ENCODE measurements at regions of chr4 and their contacts with region 1.

Region 1: GRCh38 chr4:77586951-77587383 is 18.7 kb upstream of the CXCL13 start:
- DNase-seq: peak; percentile 87
- ATAC-seq: peak; percentile 94
- H3K4me3 Mint-ChIP-seq: peak overlapping the region; percentile 54
- H3K27ac Mint-ChIP-seq: peak overlapping the region; percentile 84
- H3K4me1 Mint-ChIP-seq: peaks cover 66% of the 10 kb centered on the region
- H3K27me3 Mint-ChIP-seq: peaks cover 16% of the 10 kb centered on the region

Region 2: DNA sequence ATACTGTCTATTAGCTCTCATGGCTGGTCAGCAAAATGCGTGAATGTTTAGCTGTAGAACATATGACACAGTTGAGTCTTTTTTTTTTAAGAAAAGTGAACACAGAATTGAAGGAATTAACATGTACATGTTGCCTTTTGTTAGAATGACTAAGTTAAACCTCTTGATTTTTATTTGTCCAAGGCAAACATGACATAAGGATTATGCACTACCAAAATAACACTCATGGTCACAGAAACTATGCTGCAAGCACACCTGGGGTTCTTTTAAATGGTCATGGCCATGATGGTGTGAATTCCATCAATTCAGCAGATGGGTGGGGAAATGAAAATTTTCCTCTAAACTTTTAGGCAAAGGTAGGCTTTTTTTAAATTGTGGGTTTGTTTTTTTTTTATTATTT is 61.4 kb before region 1 on chr4:
- CTCF ChIA-PET with region 1: no interaction called
- POLR2A ChIA-PET with region 1: no interaction called
- intact Hi-C with region 1: loop called in 1 of 2 experiments (anchors 2 kb)
- DNase-seq: no peak
- ATAC-seq: no peak
- H3K4me3 Mint-ChIP-seq: no peak overlapping the region
- H3K27ac Mint-ChIP-seq: no peak overlapping the region
- H3K4me1 Mint-ChIP-seq: peaks cover 2% of the 10 kb centered on the region
- H3K27me3 Mint-ChIP-seq: peaks cover 29% of the 10 kb centered on the region

Region 3: DNA sequence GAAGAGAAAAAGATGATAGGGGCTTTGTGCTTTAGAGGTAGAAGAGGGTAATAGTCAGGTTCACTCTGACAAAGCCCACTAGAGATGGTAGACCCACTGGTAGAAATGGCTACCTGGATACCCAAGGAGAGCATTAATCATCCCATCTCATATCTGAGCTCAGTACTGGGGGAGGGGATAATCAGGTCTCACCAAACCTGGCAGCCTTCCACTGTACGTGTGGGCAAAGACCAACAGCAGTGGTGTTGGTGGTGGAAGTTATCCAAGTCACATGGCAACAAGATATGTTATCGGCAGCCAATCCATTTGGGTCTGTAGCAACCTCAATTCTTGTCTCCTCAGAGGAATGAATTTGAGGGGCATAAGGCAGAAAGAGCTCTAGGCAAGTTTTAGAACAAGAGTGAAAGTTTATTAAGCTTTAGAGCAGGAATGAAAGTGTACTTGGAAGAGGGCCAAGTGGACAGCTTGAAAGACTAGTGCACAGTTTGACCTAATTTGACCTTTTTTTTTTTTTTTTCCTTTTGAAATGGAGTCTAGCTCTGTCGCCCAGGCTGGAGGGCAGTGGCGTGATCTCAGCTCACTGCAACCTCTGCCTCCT is 48.3 kb before region 1 on chr4:
- CTCF ChIA-PET with region 1: no interaction called
- POLR2A ChIA-PET with region 1: no interaction called
- intact Hi-C with region 1: loop called (anchors 2 kb)
- DNase-seq: peak; percentile 26
- ATAC-seq: peak; percentile 59
- H3K4me3 Mint-ChIP-seq: no peak overlapping the region
- H3K27ac Mint-ChIP-seq: peak overlapping the region; percentile 27
- H3K4me1 Mint-ChIP-seq: peaks cover 19% of the 10 kb centered on the region
- H3K27me3 Mint-ChIP-seq: peaks cover 45% of the 10 kb centered on the region

Region 4: DNA sequence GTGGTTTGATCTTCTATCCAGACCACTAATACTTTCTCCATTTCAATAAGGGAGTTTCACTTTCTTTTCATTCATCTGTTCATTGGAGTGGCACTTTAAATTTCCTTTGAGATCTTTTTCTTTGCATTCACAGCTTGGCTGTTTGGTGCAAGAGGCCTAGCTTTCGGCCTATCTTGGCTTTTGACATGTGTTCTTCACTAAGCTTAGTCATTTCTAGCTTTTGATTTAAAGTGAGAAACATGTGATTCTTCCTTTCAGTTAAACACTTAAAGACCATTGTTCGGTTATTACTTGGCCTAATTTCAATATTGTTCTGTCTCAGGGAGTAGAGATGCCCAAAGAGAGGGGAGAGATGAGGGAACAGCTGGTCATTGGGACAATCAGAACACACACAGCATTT is 42.9 kb after region 1 on chr4:
- CTCF ChIA-PET with region 1: no interaction called
- POLR2A ChIA-PET with region 1: no interaction called
- intact Hi-C with region 1: loop called in 1 of 2 experiments (anchors 1 kb)
- DNase-seq: peak; percentile 40
- ATAC-seq: peak; percentile 93
- H3K4me3 Mint-ChIP-seq: no peak overlapping the region
- H3K27ac Mint-ChIP-seq: peak overlapping the region; percentile 23
- H3K4me1 Mint-ChIP-seq: peaks cover 16% of the 10 kb centered on the region
- H3K27me3 Mint-ChIP-seq: peaks cover 2% of the 10 kb centered on the region

Region 5: DNA sequence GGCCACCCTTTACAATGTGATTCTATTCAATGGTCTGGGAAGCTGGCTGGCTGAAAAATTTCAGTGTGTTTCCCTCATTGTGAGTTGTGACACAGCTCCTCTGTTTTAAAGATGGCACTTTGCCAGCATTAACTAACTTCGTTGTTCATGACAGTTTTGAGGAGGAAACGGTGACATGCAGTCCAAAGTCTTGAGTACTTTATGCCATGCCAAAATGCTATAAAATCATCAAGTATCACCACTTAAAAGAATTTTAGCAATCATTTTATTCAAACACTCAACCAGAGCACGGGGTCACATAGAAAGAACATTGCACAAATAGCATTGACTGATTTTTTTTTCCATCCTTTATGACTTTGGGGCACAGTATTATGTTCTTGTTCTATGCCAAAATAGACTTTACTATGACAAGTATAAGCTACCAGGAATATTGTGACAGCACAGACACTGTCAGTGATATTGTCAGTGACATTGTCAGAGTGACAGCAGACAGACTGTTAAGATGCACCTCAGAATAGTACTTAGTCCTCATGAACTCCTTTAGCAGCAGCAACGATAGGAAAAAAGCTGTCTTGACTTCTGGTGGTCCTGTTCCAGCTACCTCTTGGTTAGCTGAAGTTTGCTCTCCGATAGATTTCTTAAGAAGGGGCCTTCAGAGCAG is 65.4 kb after region 1 on chr4:
- CTCF ChIA-PET with region 1: no interaction called
- POLR2A ChIA-PET with region 1: no interaction called
- intact Hi-C with region 1: no loop called
- DNase-seq: no peak
- ATAC-seq: no peak
- H3K4me3 Mint-ChIP-seq: no peak overlapping the region
- H3K27ac Mint-ChIP-seq: no peak overlapping the region
- H3K4me1 Mint-ChIP-seq: no peaks in the 10 kb centered on the region
- H3K27me3 Mint-ChIP-seq: peaks cover 3% of the 10 kb centered on the region

Region 6: DNA sequence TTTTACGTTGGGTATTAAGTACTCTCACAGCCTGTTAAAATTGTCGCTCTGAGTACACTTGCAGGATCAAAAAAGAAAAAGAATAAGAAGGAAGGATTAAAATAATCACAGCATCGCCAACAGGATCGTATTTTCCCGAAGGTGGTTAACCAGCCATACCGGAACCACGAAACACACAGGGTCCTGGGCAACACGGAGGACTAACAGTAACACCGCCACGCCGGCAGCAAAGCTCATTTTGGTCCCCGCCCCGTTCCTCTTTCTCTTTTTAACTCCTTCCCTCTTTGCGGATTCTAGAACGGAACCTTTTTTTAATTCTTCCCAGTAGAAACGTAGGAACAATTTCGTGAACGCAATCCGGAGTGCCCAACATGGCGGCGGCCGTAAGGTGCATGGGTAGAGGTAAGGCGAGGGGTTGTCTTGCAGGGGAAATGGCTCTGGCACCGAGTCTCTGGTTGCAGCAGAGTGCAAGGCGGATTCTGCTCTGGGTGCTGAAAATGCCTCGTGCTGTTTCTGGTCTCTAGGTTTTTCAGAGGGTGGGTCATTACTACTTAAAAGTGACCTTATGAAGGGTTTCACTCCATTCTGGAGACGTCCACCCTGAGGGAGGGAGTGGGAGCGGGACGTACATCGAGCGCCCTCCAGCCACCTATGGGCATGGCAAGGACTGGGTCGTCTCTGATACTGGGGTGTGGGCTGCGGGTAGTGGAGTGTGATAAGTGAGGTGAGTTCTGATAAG is 275.7 kb after region 1 on chr4 and contains the start of gene MRPL1:
- CTCF ChIA-PET with region 1: no interaction called
- POLR2A ChIA-PET with region 1: interaction called, 9 read pairs
- intact Hi-C with region 1: loop called (anchors 1 to 2 kb)
- DNase-seq: peak; percentile 92
- ATAC-seq: peak; percentile 78
- H3K4me3 Mint-ChIP-seq: peak within 1 kb of the TSS; percentile 98
- H3K27ac Mint-ChIP-seq: peak within 1 kb of the TSS; percentile 100
- H3K4me1 Mint-ChIP-seq: peaks cover 61% of the 10 kb centered on the region
- H3K27me3 Mint-ChIP-seq: peaks cover 2% of the 10 kb centered on the region
- total RNA-seq, gene MRPL1: 61.1 to 70.6 TPM

Region 7: DNA sequence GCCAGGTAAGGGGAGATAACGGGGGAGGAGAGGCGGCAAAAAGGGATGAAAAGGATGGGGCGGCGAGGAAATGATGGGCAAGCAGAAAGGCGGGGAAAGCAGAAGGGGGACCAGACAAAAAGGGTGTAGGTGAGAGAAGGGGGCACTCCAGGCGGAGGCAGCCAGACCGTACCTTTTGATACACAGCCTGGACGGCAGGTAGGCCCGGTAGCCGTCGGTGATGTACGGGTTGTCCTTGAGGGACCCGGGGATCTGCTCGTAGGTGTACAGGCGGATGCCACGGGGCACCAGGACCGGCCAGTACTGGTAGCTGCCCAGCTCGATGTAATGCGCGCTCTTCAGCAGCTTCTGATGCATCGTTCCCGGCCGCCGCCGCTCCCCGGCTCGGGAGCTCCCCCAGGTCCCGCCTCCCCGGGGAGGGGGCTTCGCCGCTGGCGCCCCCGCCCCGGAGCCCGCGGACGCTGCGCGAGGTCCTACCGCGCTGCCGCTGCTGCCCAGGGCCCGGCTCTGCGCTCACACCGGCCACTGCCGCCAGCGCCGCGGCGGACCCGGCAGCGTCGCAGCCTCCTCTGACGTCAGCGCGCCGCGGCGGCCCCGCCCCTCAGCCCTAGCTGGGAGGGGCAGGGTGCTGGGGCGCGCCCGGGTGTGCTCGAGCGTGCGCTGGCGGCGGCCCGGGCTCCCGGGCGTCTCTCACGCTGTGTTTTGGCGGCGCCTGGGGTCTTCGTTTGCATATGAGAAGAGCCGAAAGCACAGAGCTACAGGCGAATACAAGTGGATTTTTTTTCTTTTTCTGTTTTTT is 1352.1 kb after region 1 on chr4 and contains the start of gene PAQR3:
- CTCF ChIA-PET with region 1: no interaction called
- POLR2A ChIA-PET with region 1: no interaction called
- intact Hi-C with region 1: loop called in 1 of 2 experiments (anchors 10 kb)
- DNase-seq: peak; percentile 91
- ATAC-seq: peak; percentile 95
- H3K4me3 Mint-ChIP-seq: peak within 1 kb of the TSS; percentile 88
- H3K27ac Mint-ChIP-seq: peak within 1 kb of the TSS; percentile 83
- H3K4me1 Mint-ChIP-seq: peaks cover 30% of the 10 kb centered on the region
- H3K27me3 Mint-ChIP-seq: peaks cover 8% of the 10 kb centered on the region
- total RNA-seq, gene PAQR3: 7.8 to 8.8 TPM